ENCODE measurements at regions of chr12 and their contacts with region 1.

Region 1: GRCh38 chr12:66403746-66404145 is 101.5 kb downstream of the HELB start:
- DNase-seq: no peak
- H3K4me3 Mint-ChIP-seq: no peak overlapping the region
- H3K27ac Mint-ChIP-seq: no peak overlapping the region
- H3K4me1 Mint-ChIP-seq: no peaks in the 10 kb centered on the region
- H3K27me3 Mint-ChIP-seq: no peaks in the 10 kb centered on the region

Region 2: GRCh38 chr12:66269757-66270383 is 133.9 kb before region 1 on chr12:
- CTCF ChIA-PET with region 1: interaction called, 53 read pairs
- POLR2A ChIA-PET with region 1: interaction called, 3 read pairs
- intact Hi-C with region 1: no loop called
- DNase-seq: peak; percentile 30
- H3K4me3 Mint-ChIP-seq: no peak overlapping the region
- H3K27ac Mint-ChIP-seq: no peak overlapping the region
- H3K4me1 Mint-ChIP-seq: peaks cover 4% of the 10 kb centered on the region
- H3K27me3 Mint-ChIP-seq: no peaks in the 10 kb centered on the region